Activated CD4-positive, alpha-beta T cell treated with anti-CD3 and anti-CD28 coated beads for 36 hours (primary cell): ENCODE measurements at regions of chr5 and their contacts with region 1.

Region 1: GRCh38 chr5:172188033-172188892 is at the start of gene STK10:
- DNase-seq: peak; percentile 94
- ATAC-seq: peak; percentile 72
- H3K4me3 Mint-ChIP-seq: peak within 1 kb of the TSS; percentile 95
- H3K27ac Mint-ChIP-seq: peak within 1 kb of the TSS; percentile 98
- H3K4me1 Mint-ChIP-seq: peaks cover 28% of the 10 kb centered on the region
- H3K27me3 Mint-ChIP-seq: no peaks in the 10 kb centered on the region
- total RNA-seq, gene STK10: 83.1 to 144 TPM

Region 2: GRCh38 chr5:170338933-170339779 is 1849.1 kb before region 1 on chr5:
- CTCF ChIA-PET with region 1: no interaction called
- POLR2A ChIA-PET with region 1: no interaction called
- intact Hi-C with region 1: loop called in 1 of 2 experiments (anchors 10 kb)
- DNase-seq: peak; percentile 80
- ATAC-seq: peak; percentile 82
- H3K4me3 Mint-ChIP-seq: no peak overlapping the region
- H3K27ac Mint-ChIP-seq: peak overlapping the region; percentile 8
- H3K4me1 Mint-ChIP-seq: peaks cover 45% of the 10 kb centered on the region
- H3K27me3 Mint-ChIP-seq: no peaks in the 10 kb centered on the region

Region 3: GRCh38 chr5:171676286-171676944 is 511.8 kb before region 1 on chr5:
- CTCF ChIA-PET with region 1: no interaction called
- POLR2A ChIA-PET with region 1: no interaction called
- intact Hi-C with region 1: no loop called
- DNase-seq: no peak
- ATAC-seq: no peak
- H3K4me3 Mint-ChIP-seq: no peak overlapping the region
- H3K27ac Mint-ChIP-seq: no peak overlapping the region
- H3K4me1 Mint-ChIP-seq: peaks cover 6% of the 10 kb centered on the region
- H3K27me3 Mint-ChIP-seq: peaks cover 12% of the 10 kb centered on the region

Region 4: DNA sequence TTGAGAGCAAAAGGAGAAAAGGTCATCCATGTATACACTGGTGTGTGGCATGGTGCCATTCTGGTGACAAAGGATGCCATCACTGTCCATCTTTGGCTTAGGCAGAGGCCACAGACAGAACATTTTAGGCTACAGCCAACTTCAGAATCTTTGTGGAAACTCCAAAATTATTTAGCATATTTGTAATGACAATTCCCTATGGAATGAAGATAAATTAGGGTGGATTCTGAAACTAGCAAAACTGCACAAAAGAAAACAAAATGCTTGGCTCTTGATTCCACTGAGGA is 274.3 kb before region 1 on chr5:
- CTCF ChIA-PET with region 1: no interaction called
- POLR2A ChIA-PET with region 1: no interaction called
- intact Hi-C with region 1: loop called (anchors 1 to 5 kb)
- DNase-seq: no peak
- ATAC-seq: no peak
- H3K4me3 Mint-ChIP-seq: no peak overlapping the region
- H3K27ac Mint-ChIP-seq: peak overlapping the region; percentile 83
- H3K4me1 Mint-ChIP-seq: peaks cover 44% of the 10 kb centered on the region
- H3K27me3 Mint-ChIP-seq: no peaks in the 10 kb centered on the region

Region 5: GRCh38 chr5:172065501-172065990 is 122.7 kb before region 1 on chr5:
- CTCF ChIA-PET with region 1: interaction called, 7 read pairs
- POLR2A ChIA-PET with region 1: no interaction called
- intact Hi-C with region 1: loop called (anchors 2 kb)
- DNase-seq: no peak
- ATAC-seq: no peak
- H3K4me3 Mint-ChIP-seq: no peak overlapping the region
- H3K27ac Mint-ChIP-seq: peak overlapping the region; percentile 51
- H3K4me1 Mint-ChIP-seq: peaks cover 57% of the 10 kb centered on the region
- H3K27me3 Mint-ChIP-seq: no peaks in the 10 kb centered on the region

Region 6: DNA sequence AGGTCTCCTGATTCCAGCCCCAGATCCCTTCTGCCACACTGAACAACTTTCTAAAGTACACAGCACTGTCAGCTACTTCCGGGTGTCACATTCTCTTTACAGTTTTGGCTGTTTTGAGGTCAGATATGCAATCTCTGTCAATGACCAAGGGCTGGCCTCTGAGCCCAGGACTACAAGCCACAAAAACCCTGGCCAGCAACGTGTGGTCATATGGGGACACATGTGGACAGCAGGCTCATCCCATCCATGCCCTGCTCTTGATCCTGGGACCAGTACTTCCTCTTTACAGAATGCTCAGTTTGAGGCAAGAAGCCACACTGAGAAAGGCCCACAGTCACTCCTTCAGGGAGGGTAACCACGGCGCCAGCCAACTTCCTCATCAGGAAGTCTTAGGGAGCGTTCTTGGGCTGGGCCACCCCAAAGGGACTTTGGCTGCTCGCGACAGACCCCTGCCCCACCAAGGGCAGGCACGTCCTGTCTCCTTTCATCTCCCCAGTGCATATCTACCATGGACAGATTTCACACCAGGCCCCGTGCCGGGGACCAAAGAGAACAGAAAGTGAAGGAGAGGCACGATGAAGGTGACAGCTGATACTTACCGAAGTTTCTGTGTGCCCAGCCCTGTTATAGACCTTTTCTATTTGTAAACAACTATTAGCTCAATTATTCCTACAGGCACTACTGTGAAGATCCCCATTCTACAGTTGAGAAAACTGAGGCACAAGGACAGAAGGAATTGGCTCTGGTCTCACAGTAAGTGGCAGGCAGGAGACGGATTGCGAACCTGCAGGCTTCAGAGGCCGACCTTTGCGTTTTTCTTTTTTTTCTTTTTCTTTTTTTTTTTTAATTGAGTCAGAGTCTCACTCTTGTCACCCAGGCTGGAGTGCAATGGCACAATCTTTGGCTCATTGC is 37.5 kb before region 1 on chr5:
- CTCF ChIA-PET with region 1: interaction called, 3 read pairs
- POLR2A ChIA-PET with region 1: no interaction called
- intact Hi-C with region 1: loop called in 1 of 2 experiments (anchors 1 kb)
- DNase-seq: peak; percentile 49
- ATAC-seq: peak; percentile 76
- H3K4me3 Mint-ChIP-seq: peak overlapping the region; percentile 58
- H3K27ac Mint-ChIP-seq: peak overlapping the region; percentile 95
- H3K4me1 Mint-ChIP-seq: peaks cover 80% of the 10 kb centered on the region
- H3K27me3 Mint-ChIP-seq: no peaks in the 10 kb centered on the region

Region 7: GRCh38 chr5:172223901-172224873 is 35.9 kb after region 1 on chr5:
- CTCF ChIA-PET with region 1: interaction called, 6 read pairs
- POLR2A ChIA-PET with region 1: interaction called, 3 read pairs
- intact Hi-C with region 1: loop called in 1 of 2 experiments (anchors 1 kb)
- DNase-seq: peak; percentile 82
- ATAC-seq: peak; percentile 91
- H3K4me3 Mint-ChIP-seq: peak overlapping the region; percentile 5
- H3K27ac Mint-ChIP-seq: peak overlapping the region; percentile 72
- H3K4me1 Mint-ChIP-seq: peaks cover 38% of the 10 kb centered on the region
- H3K27me3 Mint-ChIP-seq: peaks cover 1% of the 10 kb centered on the region

Region 8: GRCh38 chr5:172293054-172293744 is 104.9 kb after region 1 on chr5:
- CTCF ChIA-PET with region 1: interaction called, 7 read pairs
- POLR2A ChIA-PET with region 1: no interaction called
- intact Hi-C with region 1: loop called in 1 of 2 experiments (anchors 1 kb)
- DNase-seq: peak; percentile 78
- ATAC-seq: peak; percentile 100
- H3K4me3 Mint-ChIP-seq: no peak overlapping the region
- H3K27ac Mint-ChIP-seq: no peak overlapping the region
- H3K4me1 Mint-ChIP-seq: peaks cover 2% of the 10 kb centered on the region
- H3K27me3 Mint-ChIP-seq: peaks cover 3% of the 10 kb centered on the region